Activated CD4-positive, alpha-beta T cell treated with anti-CD3 and anti-CD28 coated beads for 36 hours (primary cell): ENCODE measurements at regions of chr9 and their contacts with region 1.

Region 1: GRCh38 chr9:21031091-21031807 is at the start of gene HACD4:
- DNase-seq: peak; percentile 79
- ATAC-seq: peak; percentile 79
- H3K4me3 Mint-ChIP-seq: peak within 1 kb of the TSS; percentile 53
- H3K27ac Mint-ChIP-seq: peak within 1 kb of the TSS; percentile 71
- H3K4me1 Mint-ChIP-seq: peaks cover 26% of the 10 kb centered on the region
- H3K27me3 Mint-ChIP-seq: no peaks in the 10 kb centered on the region
- total RNA-seq, gene HACD4: 2.7 to 3.0 TPM

Region 2: DNA sequence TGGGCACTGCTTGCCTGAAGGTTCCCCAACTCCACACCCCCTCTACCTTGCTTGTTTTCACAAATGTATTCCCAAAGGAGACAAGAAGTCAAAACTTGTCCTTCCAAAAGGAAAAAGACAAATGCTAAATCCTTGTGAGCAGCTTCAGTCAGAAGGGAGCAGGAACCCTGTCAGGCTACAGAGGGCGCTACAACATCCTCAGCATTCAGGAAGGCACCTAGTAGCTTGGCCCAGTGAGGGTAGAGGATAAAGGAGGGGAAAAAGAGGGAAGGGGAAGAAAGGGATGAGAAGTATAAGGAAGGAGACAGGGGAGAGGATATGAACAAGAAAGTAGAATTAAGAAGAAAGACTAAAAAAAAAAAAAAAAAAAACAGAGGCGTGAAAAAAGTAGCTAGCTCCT is 506.5 kb before region 1 on chr9:
- CTCF ChIA-PET with region 1: no interaction called
- POLR2A ChIA-PET with region 1: no interaction called
- intact Hi-C with region 1: no loop called
- DNase-seq: peak; percentile 40
- ATAC-seq: no peak
- H3K4me3 Mint-ChIP-seq: no peak overlapping the region
- H3K27ac Mint-ChIP-seq: no peak overlapping the region
- H3K4me1 Mint-ChIP-seq: peaks cover 78% of the 10 kb centered on the region
- H3K27me3 Mint-ChIP-seq: no peaks in the 10 kb centered on the region

Region 3: DNA sequence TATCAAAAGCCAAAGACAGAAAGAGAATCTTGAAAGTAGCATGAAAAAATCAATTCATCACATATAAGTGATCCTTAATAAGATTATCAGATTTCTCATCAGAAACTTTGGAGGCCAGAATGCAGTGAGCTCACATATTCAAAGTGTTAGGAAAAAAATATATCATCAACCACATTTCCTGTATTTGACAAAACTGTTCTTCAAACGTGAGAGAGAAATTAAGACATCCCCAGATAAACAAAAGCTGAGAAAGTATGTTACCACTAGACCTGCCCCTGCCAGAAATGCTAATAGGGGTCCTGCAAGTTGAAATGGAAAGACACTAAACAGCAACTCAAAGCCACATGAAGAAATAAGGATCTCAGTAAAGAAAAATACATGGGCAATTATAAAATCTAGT is 29.7 kb before region 1 on chr9:
- CTCF ChIA-PET with region 1: interaction called, 3 read pairs
- POLR2A ChIA-PET with region 1: no interaction called
- intact Hi-C with region 1: loop called in 1 of 2 experiments (anchors 2 kb)
- DNase-seq: no peak
- ATAC-seq: peak; percentile 44
- H3K4me3 Mint-ChIP-seq: no peak overlapping the region
- H3K27ac Mint-ChIP-seq: peak overlapping the region; percentile 10
- H3K4me1 Mint-ChIP-seq: peaks cover 35% of the 10 kb centered on the region
- H3K27me3 Mint-ChIP-seq: no peaks in the 10 kb centered on the region

Region 4: GRCh38 chr9:21096172-21096900 is 65.1 kb after region 1 on chr9:
- CTCF ChIA-PET with region 1: no interaction called
- POLR2A ChIA-PET with region 1: no interaction called
- intact Hi-C with region 1: loop called (anchors 1 kb)
- DNase-seq: peak; percentile 64
- ATAC-seq: peak; percentile 95
- H3K4me3 Mint-ChIP-seq: peak overlapping the region; percentile 58
- H3K27ac Mint-ChIP-seq: peak overlapping the region; percentile 87
- H3K4me1 Mint-ChIP-seq: peaks cover 31% of the 10 kb centered on the region
- H3K27me3 Mint-ChIP-seq: no peaks in the 10 kb centered on the region